ENCODE measurements at regions of chr1 and their contacts with region 1.

Region 1: DNA sequence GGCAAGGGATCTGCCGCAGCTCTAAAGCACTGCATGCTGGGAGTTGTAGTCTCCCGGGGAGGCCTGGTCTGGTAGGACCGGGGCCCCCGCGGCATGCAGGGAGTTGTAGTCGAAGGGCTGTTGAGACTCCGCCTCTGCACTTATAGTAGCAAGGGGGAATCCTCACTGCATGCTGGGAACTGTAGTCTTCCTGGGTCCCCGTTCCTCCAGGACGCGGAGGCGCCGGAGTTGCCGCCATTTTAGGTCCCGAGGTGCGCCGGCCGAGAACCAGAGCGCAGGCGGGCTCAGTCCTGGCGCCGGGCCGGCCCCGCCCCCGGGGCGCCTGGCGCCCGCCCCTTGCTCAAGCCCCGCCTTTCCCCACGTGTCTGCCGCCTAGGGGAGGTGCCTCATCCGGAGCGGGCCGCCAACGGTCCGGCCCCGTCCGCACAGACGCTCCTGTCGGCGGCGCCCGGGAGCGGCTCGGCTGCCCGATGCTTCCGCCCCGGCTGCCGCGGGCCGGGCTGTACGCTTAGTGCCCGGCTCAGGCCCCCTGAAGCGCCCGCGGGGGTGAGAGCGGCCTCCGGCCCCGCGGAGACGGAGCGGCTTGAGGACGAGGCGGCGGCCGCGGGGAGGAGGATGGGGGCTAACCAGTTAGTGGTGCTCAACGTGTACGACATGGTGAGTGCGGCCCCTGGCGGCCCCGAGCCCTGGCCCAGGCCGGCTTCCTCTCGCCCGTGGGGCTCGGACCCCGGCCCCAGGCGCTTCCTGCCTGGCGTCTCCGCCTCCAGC is at the start of gene DESI2:
- DNase-seq: peak; percentile 99
- ATAC-seq: peak; percentile 99
- H3K4me3 ChIP-seq: peak within 1 kb of the TSS; percentile 54 to 77
- H3K27ac ChIP-seq: peak within 1 kb of the TSS in 1 of 2 donors; percentile 68
- H3K4me1 ChIP-seq: peaks cover 3 to 4% of the 10 kb centered on the region in 2 donors
- H3K27me3 ChIP-seq: no peaks in the 10 kb centered on the region
- total RNA-seq, gene DESI2: 35.4 to 38.4 TPM

Region 2: DNA sequence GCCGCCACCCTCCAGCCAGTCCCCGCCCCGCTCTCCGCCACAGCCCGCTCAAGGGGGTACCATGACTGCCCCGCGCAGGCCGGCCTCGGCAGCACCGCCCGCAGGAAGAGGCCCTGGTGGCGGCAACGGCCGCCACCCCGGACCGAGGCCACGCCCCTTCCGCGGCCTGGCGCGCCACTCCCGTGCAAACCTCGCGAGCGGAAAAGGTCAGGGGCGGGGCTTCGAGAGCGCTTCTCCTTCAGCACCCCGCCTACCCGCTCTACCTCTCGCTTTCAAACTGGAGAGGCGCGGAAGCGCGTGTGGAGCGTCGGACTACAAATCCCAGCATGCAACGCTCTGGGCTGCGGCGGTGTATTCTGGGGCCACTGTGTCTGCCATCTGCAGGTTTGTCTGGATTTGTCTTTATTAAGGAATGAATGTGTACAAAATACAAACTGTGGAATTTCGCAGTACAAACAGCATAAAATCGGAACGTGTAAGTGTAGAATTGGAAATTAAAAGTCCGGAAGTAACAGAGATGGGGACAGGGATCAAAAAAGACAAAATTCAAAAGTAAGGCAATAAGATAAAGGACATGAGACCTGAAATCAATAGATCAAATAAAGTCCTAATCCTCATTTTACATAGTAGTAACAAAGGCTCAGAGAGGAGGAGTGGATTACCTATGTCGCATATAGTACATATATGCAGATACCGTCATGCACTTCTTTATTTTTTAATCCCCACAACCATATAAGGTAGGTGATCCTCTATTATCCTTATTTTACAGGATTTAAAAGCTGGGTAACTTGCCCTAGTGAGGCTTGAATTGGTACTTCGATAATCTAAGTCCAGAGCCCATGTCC is 200.7 kb before region 1 on chr1:
- intact Hi-C with region 1: loop called in 1 of 2 experiments (anchors 5 kb)
- DNase-seq: peak; percentile 100
- ATAC-seq: peak; percentile 100
- H3K4me3 ChIP-seq: peak overlapping the region in 1 of 2 donors; percentile 40
- H3K27ac ChIP-seq: no peak overlapping the region
- H3K4me1 ChIP-seq: peaks cover 5% of the 10 kb centered on the region in 2 donors
- H3K27me3 ChIP-seq: no peaks in the 10 kb centered on the region

Region 3: GRCh38 chr1:244801246-244801645 is 148.4 kb after region 1 on chr1:
- intact Hi-C with region 1: loop called in 1 of 2 experiments (anchors 5 kb)
- DNase-seq: no peak
- ATAC-seq: no peak
- H3K4me3 ChIP-seq: no peak overlapping the region
- H3K27ac ChIP-seq: no peak overlapping the region
- H3K4me1 ChIP-seq: no peaks in the 10 kb centered on the region
- H3K27me3 ChIP-seq: no peaks in the 10 kb centered on the region

Region 4: DNA sequence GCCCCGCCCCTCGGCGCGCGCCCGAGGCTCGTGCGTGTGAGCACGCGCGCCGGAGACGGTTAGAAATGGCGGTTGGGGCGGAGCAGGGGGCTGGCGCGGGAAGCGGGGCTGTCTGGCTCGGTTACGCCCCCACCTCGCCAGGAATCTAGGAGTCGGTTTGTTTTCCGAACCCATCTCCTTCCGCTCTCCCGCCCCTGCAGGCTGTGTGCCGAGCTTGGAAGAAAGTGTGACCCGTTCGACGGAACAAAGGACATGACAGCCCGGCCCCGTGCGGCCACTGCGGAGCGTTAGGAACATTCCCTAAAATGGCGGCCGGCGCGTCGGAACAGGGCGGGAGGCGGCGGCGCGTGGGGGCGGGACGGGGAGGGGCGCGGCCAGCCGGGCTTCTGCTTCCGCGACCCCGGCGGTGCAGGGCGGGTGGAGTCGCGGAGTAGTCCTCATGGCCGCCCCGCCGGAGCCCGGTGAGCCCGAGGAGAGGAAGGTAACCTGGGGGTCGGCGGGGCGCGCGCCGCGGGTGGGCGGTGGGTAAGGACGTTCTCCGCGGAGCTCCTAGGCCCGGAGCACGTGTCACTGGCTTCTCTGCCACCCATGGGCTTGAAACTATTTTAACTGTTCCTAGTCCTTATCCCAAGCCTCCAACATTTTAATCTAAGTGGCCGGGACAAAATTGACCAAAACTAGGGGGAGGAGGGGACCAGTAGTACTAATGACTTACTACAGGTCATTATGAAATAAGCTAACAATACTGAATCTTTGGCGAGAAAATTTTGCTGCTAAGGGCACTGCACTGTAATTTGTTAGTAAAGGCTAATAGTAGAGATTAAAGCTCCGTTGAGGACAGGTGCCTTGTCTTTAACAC is 182.6 kb after region 1 on chr1 and contains the start of gene COX20:
- intact Hi-C with region 1: loop called (anchors 2 to 10 kb)
- DNase-seq: peak; percentile 94 to 96
- ATAC-seq: peak; percentile 95
- H3K4me3 ChIP-seq: peak within 1 kb of the TSS; percentile 92 to 98
- H3K27ac ChIP-seq: peak within 1 kb of the TSS; percentile 97
- H3K4me1 ChIP-seq: peaks cover 3 to 6% of the 10 kb centered on the region in 2 donors
- H3K27me3 ChIP-seq: no peaks in the 10 kb centered on the region
- total RNA-seq, gene COX20: 22.8 to 29.7 TPM

Measured in aorta (tissue), 5 donors.